IMR-90 (cell line): ENCODE measurements at regions of chr5 and their contacts with region 1.

Region 1: GRCh38 chr5:160419458-160420330 is 813 bp upstream of the SLU7 start:
- DNase-seq: no peak
- ATAC-seq: peak; percentile 2
- H3K4me3 ChIP-seq: peak overlapping the region; percentile 87
- H3K27ac ChIP-seq: no peak overlapping the region; the same call in 1 of the 2 replicates
- H3K4me1 ChIP-seq: peaks cover 7% of the 10 kb centered on the region
- H3K27me3 ChIP-seq: no peaks in the 10 kb centered on the region
- CTCF ChIP-seq: no peak
- POLR2A ChIP-seq: no peak
- RAD21 ChIP-seq: no peak

Region 2: GRCh38 chr5:159965031-159965837 is 454.5 kb before region 1 on chr5:
- CTCF ChIA-PET with region 1: no interaction called
- POLR2A ChIA-PET with region 1: no interaction called
- dilution Hi-C with region 1: no loop called
- in situ Hi-C with region 1: no loop called
- intact Hi-C with region 1: no loop called
- DNase-seq: peak; percentile 57
- ATAC-seq: peak; percentile 96
- H3K4me3 ChIP-seq: no peak overlapping the region
- H3K27ac ChIP-seq: no peak overlapping the region
- H3K4me1 ChIP-seq: peaks cover 5% of the 10 kb centered on the region
- H3K27me3 ChIP-seq: no peaks in the 10 kb centered on the region
- CTCF ChIP-seq: peak; percentile 71
- POLR2A ChIP-seq: no peak
- RAD21 ChIP-seq: peak; percentile 85

Region 3: GRCh38 chr5:160390787-160391696 is 28.7 kb before region 1 on chr5:
- CTCF ChIA-PET with region 1: interaction called, 6 read pairs
- POLR2A ChIA-PET with region 1: interaction called, 19 read pairs
- dilution Hi-C with region 1: no loop called
- in situ Hi-C with region 1: no loop called
- intact Hi-C with region 1: no loop called
- DNase-seq: peak; percentile 36
- ATAC-seq: no peak; the same call in 1 of the 2 replicates
- H3K4me3 ChIP-seq: no peak overlapping the region
- H3K27ac ChIP-seq: no peak overlapping the region
- H3K4me1 ChIP-seq: no peaks in the 10 kb centered on the region
- H3K27me3 ChIP-seq: no peaks in the 10 kb centered on the region
- CTCF ChIP-seq: peak; percentile 59
- POLR2A ChIP-seq: no peak
- RAD21 ChIP-seq: peak; percentile 69

Region 4: GRCh38 chr5:160555961-160556631 is 136.4 kb after region 1 on chr5:
- CTCF ChIA-PET with region 1: no interaction called
- POLR2A ChIA-PET with region 1: no interaction called
- dilution Hi-C with region 1: no loop called
- in situ Hi-C with region 1: no loop called
- intact Hi-C with region 1: no loop called
- DNase-seq: no peak
- ATAC-seq: no peak
- H3K4me3 ChIP-seq: no peak overlapping the region
- H3K27ac ChIP-seq: no peak overlapping the region
- H3K4me1 ChIP-seq: no peaks in the 10 kb centered on the region
- H3K27me3 ChIP-seq: no peaks in the 10 kb centered on the region
- CTCF ChIP-seq: no peak
- POLR2A ChIP-seq: no peak
- RAD21 ChIP-seq: no peak

Region 5: DNA sequence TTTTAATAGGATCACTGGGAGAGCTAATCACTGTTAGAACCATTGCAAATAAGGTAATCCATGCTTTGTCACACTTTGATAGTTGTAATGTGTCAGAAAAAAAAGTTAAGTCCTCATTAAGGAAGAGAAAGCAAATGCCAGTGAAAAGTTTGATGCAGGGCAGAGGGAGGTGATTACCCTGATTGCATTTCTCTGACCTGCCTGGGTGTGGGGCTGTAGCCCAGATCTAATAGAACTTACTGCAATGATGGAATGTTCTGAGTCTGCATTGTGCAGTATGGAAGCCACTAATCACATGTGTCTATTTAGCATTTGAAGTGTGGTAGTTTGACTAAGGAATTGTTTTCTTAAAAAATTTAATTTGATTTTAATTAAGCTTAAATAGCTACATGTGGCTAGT is 229.6 kb after region 1 on chr5:
- CTCF ChIA-PET with region 1: no interaction called
- POLR2A ChIA-PET with region 1: no interaction called
- dilution Hi-C with region 1: no loop called
- in situ Hi-C with region 1: no loop called
- intact Hi-C with region 1: no loop called
- DNase-seq: no peak
- ATAC-seq: no peak
- H3K4me3 ChIP-seq: no peak overlapping the region
- H3K27ac ChIP-seq: no peak overlapping the region
- H3K4me1 ChIP-seq: no peaks in the 10 kb centered on the region
- H3K27me3 ChIP-seq: no peaks in the 10 kb centered on the region
- CTCF ChIP-seq: no peak
- POLR2A ChIP-seq: no peak
- RAD21 ChIP-seq: no peak